ENCODE measurements at regions of chr17 and their contacts with region 1.

Region 1: GRCh38 chr17:28433721-28434120 is 27.7 kb upstream of the SLC46A1 start:
- DNase-seq: no peak
- ATAC-seq: no peak
- H3K4me3 ChIP-seq: no peak overlapping the region
- H3K27ac ChIP-seq: no peak overlapping the region
- H3K4me1 ChIP-seq: no peaks in the 10 kb centered on the region
- H3K27me3 ChIP-seq: peaks cover 6% of the 10 kb centered on the region
- CTCF ChIP-seq: no peak

Region 2: DNA sequence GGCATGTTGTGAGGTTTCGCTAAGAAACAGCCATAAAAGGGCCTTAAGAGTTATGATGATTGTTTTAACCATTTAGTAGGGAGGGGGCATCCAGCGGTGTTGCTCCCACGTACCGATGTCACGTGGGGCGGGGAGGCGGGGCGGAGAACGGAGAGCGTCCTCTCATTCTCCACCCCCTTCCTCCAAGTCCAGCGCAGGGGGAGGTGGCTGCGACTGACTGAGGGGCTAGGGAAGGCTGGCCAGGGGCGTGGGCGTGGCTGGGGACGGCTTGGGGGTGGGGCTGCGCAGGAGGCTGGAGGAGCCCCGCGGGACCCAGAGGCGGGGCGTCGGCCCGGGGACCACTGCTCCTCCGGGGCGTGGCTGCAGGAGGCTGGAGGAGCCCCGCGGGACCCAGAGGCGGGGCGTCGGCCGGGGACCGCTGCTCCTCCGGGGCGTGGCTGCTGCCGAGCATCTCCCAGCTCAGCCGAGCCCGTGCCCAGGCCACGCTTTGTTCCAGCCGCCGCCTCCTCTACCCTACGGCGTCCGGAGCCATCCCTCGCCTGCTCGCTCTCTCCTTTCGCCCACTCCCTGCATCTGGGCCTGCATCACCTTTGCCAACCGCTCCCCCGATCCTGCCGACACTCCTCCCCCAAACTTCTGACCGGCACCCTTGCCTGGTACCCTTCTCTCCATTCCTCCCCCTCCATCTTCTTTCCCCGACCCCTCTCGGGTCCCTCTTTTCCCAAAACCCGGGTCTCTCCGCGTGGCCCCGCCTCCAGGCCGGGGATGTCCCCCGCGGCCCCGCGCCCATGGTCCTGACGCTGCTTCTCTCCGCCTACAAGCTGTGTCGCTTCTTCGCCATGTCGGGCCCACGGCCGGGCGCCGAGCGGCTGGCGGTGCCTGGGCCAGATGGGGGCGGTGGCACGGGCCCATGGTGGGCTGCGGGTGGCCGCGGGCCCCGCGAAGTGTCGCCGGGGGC is 62.2 kb before region 1 on chr17 and contains the start of gene SARM1:
- intact Hi-C with region 1: loop called (anchors 10 kb)
- DNase-seq: peak; percentile 87
- ATAC-seq: peak; percentile 82
- H3K4me3 ChIP-seq: peak within 1 kb of the TSS; percentile 58
- H3K27ac ChIP-seq: peak within 1 kb of the TSS; percentile 51
- H3K4me1 ChIP-seq: peaks cover 28% of the 10 kb centered on the region
- H3K27me3 ChIP-seq: no peaks in the 10 kb centered on the region
- CTCF ChIP-seq: no peak
- total RNA-seq, gene SARM1: 14.4 TPM

Measured in upper lobe of right lung (tissue), 1 donor.